Activated CD4-positive, alpha-beta memory T cell treated with anti-CD3 and anti-CD28 coated beads for 36 hours (primary cell): ENCODE measurements at regions of chr7 and their contacts with region 1.

Region 1: DNA sequence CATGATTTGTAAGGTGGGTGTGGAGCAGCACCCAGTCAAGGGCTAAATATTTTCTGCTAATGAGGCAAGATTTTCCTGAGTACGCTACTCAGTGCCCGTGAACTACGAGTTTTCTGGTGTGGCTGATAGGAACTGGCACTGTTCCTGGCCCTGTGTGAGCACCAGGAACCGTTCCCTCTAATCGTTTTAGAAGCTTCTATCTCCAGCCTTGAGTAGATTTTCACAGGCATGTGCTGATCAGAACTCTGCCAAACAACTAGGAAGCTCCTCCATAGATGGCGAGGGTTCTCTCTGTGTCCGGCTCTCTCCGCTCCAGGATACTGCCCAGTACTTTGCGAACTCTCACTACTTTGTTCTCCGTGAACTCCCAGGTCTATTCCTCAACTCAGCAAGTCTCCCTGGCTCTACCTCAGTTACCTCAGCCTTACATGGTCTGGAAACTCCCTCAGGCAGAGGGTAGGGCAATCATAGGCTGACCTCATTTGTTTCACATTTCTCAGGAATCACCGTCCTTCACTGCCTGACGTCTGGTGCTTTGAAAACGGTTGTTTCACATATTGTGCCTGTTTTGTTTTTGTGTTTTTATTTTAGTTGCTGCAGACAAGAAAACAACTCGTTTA is 17.6 kb downstream of the TRIM4 start:
- DNase-seq: no peak
- H3K4me3 Mint-ChIP-seq: no peak overlapping the region
- H3K27ac Mint-ChIP-seq: no peak overlapping the region
- H3K4me1 Mint-ChIP-seq: no peaks in the 10 kb centered on the region
- H3K27me3 Mint-ChIP-seq: no peaks in the 10 kb centered on the region

Region 2: DNA sequence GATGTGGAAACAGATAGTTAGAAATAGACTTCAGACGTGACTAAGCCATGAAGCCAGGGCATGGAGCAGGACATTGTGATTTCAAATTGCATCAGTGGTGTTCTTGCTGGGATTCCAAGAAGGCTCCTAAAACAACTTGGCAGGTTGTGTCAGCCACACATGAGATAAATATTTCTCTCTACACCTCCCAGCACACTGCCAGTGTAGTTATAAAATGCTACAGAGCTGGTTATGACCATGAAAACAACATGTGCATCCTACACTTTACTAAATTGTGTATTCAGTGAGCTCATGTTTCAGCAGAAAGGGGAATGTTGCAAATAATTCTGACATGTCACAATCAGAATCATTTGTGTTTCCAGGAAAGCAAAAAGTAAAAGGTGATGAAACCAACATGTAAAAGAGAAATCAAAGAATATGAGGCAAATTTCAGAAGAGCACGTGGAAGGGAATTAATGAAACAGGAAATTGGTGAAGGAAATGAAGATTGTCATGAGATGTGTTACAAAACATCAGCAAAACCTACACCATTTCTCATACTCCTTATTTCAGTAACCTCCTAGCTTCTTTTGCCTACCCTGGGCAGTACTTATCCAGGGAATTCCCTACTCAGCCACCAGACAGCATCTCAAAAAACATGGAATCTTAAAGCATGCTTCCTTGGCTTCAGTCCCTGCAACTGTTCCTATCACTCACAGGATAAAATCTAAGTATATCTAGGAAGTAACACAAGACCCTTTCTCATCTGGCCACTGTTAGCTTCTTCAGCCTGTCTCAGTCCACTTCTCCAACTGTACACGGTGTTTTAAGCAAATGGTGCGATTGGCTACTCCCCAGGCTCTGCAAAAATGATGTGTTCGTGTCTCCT is 160.9 kb before region 1 on chr7:
- CTCF ChIA-PET with region 1: no interaction called
- POLR2A ChIA-PET with region 1: no interaction called
- intact Hi-C with region 1: no loop called
- DNase-seq: no peak
- H3K4me3 Mint-ChIP-seq: no peak overlapping the region
- H3K27ac Mint-ChIP-seq: peak overlapping the region; percentile 59
- H3K4me1 Mint-ChIP-seq: peaks cover 9% of the 10 kb centered on the region
- H3K27me3 Mint-ChIP-seq: peaks cover 9% of the 10 kb centered on the region

Region 3: DNA sequence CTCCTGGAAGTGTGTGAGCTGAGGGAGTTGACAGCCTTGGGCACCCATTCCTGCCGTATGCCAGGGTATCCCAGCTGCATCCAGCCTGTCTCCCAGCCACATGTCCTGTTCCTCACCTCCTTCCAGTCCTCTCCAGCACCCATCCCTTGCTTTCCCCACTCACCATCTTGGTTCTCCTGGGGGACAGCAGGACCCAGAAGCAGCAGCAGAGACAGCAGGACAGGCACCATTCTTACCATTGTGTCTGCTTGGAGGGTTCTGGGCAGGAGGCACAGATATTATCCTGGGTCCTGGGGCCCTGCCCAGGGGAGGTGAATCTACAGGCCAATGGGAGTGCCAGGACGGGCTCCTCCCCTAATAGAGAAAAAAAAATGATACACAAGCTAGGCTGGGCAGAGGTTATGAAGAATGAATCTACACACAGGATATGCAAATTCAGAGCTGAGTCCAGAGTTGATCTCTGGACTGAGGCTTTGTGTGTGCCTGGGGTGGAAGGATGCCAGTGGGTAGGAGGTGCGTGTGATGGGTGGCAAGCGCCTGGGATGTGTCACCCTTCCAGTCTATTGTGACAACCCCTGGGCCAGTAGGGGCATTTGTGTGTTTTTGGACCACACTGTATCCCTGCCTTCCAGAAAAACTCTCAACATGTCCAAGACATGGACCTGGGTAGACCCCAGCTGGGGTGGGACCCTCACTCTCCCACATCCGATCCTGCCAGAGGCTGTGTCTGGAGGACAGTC is 74.3 kb after region 1 on chr7 and contains the start of gene AZGP1:
- CTCF ChIA-PET with region 1: no interaction called
- POLR2A ChIA-PET with region 1: no interaction called
- intact Hi-C with region 1: loop called (anchors 2 kb)
- DNase-seq: no peak
- H3K4me3 Mint-ChIP-seq: no peak within 1 kb of the TSS
- H3K27ac Mint-ChIP-seq: no peak within 1 kb of the TSS
- H3K4me1 Mint-ChIP-seq: no peaks in the 10 kb centered on the region
- H3K27me3 Mint-ChIP-seq: no peaks in the 10 kb centered on the region
- total RNA-seq, gene AZGP1: not detected

Region 4: DNA sequence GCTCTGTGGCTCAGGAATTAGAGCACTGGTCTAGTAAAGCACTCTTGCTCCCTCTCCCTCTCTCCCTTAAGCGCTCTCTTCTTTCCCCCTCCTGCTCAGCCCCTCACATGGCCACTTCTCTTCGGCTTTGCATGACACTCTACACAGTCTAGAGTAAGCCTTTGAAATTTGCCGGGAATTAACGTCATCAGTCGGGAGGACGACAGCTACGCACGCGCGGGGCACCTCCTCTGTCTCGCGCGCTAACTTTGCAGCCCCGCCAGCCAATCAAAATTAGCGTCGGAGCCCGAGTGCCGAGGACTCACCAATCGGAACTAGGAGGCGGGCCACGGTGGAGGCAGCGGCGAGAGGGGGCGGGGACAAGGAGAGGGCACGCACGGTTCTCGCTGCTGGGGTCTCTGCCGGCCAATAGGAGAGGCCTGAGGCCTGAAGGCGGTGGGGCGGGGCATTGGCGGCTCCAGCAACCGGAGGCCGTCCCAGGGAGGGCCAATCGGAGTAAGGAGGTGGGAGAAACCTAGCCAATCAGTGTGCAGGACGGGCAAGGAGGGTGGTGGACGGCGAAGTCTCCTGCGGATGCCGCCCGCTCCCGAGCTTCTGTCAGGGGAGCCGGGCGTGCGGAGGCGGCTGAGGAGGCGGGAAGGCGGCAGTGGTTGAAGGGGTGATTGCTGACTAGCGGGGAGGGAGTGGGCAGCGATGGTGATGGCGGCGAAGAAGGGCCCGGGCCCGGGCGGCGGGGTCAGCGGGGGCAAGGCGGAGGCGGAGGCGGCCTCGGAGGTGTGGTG is 637.2 kb after region 1 on chr7 and contains the start of gene AGFG2:
- CTCF ChIA-PET with region 1: no interaction called
- POLR2A ChIA-PET with region 1: no interaction called
- intact Hi-C with region 1: no loop called
- DNase-seq: peak; percentile 100
- H3K4me3 Mint-ChIP-seq: peak within 1 kb of the TSS; percentile 95
- H3K27ac Mint-ChIP-seq: peak within 1 kb of the TSS; percentile 90
- H3K4me1 Mint-ChIP-seq: peaks cover 41% of the 10 kb centered on the region
- H3K27me3 Mint-ChIP-seq: no peaks in the 10 kb centered on the region
- total RNA-seq, gene AGFG2: 60.9 to 62.5 TPM